Activated T-helper 1 cell treated with anti-CD3 and anti-CD28 coated beads, Interleukin-12 subunit alpha, Interleukin-12 subunit beta, Interleukin-2, Interleukin-4 antibody, amounts not matched to agents 30 ng/mL and 10 ng/mL and 1 ng/mL, durations not matched to agents 14 hours and 24 hours and 36 hours (primary cell): ENCODE measurements at regions of chr1 and their contacts with region 1.

Region 1: GRCh38 chr1:198520524-198521254 is 19.8 kb downstream of the ATP6V1G3 start:
- DNase-seq: no peak
- H3K4me3 Mint-ChIP-seq: peak overlapping the region; percentile 71
- H3K27ac Mint-ChIP-seq: peak overlapping the region; percentile 84
- H3K4me1 Mint-ChIP-seq: peaks cover 62% of the 10 kb centered on the region
- H3K27me3 Mint-ChIP-seq: no peaks in the 10 kb centered on the region

Region 2: GRCh38 chr1:198167436-198167934 is 353.2 kb before region 1 on chr1:
- intact Hi-C with region 1: loop called (anchors 5 kb)
- DNase-seq: peak; percentile 20
- H3K4me3 Mint-ChIP-seq: peak overlapping the region; percentile 56
- H3K27ac Mint-ChIP-seq: peak overlapping the region; percentile 91
- H3K4me1 Mint-ChIP-seq: peaks cover 78% of the 10 kb centered on the region
- H3K27me3 Mint-ChIP-seq: no peaks in the 10 kb centered on the region

Region 3: DNA sequence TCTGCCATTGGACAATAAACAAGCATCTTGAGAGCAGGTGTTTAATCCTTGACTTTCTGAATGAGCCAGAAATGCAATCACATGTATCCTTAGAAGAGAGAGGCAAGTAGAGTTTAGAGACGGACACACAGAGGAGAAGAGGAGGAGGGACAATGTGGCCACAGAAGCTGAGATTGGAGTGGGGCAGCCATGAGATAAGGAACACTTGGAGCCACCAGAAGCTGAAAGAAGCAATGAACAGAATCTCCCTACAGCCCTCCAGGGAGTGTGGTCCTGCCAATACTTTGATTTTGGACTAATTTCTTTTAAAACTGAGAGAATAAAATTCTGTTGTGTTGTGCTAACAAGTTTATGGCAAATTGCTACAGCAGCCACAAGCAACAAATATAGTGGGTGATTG is 121.2 kb before region 1 on chr1:
- intact Hi-C with region 1: no loop called
- DNase-seq: no peak
- H3K4me3 Mint-ChIP-seq: no peak overlapping the region
- H3K27ac Mint-ChIP-seq: no peak overlapping the region
- H3K4me1 Mint-ChIP-seq: no peaks in the 10 kb centered on the region
- H3K27me3 Mint-ChIP-seq: peaks cover 12% of the 10 kb centered on the region

Region 4: DNA sequence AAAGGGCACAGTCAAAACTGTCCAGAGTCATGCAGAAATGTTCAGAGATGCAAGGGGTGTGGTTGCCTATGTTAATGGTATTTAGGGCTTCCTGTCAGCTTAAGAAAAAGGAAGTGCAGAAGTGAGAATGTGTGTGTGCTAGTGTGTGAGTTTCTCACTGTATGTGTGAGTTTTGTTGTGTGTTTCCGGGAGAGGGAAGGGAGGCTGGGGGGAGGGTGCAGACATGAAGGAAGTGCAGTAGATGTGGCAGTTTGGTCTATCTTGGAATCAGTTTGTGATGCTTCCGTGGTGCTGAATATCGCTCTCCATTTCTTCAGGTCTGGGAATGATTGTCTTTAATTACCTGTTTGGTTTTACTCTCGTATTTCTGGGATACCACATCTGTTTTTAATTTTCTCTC is 36.3 kb after region 1 on chr1:
- intact Hi-C with region 1: loop called (anchors 2 kb)
- DNase-seq: peak; percentile 43
- H3K4me3 Mint-ChIP-seq: peak overlapping the region; percentile 40
- H3K27ac Mint-ChIP-seq: peak overlapping the region; percentile 61
- H3K4me1 Mint-ChIP-seq: peaks cover 32% of the 10 kb centered on the region
- H3K27me3 Mint-ChIP-seq: no peaks in the 10 kb centered on the region

Region 5: GRCh38 chr1:198651650-198652400 is 131.1 kb after region 1 on chr1:
- intact Hi-C with region 1: loop called (anchors 1 kb)
- DNase-seq: no peak
- H3K4me3 Mint-ChIP-seq: peak overlapping the region; percentile 77
- H3K27ac Mint-ChIP-seq: peak overlapping the region; percentile 86
- H3K4me1 Mint-ChIP-seq: peaks cover 77% of the 10 kb centered on the region
- H3K27me3 Mint-ChIP-seq: no peaks in the 10 kb centered on the region

Region 6: GRCh38 chr1:198734323-198735008 is 213.8 kb after region 1 on chr1:
- intact Hi-C with region 1: loop called (anchors 1 kb)
- DNase-seq: no peak
- H3K4me3 Mint-ChIP-seq: no peak overlapping the region
- H3K27ac Mint-ChIP-seq: peak overlapping the region; percentile 73
- H3K4me1 Mint-ChIP-seq: peaks cover 79% of the 10 kb centered on the region
- H3K27me3 Mint-ChIP-seq: no peaks in the 10 kb centered on the region

Region 7: GRCh38 chr1:199226163-199226562 is 705.5 kb after region 1 on chr1:
- intact Hi-C with region 1: loop called (anchors 5 kb)
- DNase-seq: peak; percentile 26
- H3K4me3 Mint-ChIP-seq: peak overlapping the region; percentile 37
- H3K27ac Mint-ChIP-seq: peak overlapping the region; percentile 51
- H3K4me1 Mint-ChIP-seq: peaks cover 21% of the 10 kb centered on the region
- H3K27me3 Mint-ChIP-seq: peaks cover 6% of the 10 kb centered on the region